HepG2 (cell line): ENCODE measurements at regions of chr22 and their contacts with region 1.

Region 1: DNA sequence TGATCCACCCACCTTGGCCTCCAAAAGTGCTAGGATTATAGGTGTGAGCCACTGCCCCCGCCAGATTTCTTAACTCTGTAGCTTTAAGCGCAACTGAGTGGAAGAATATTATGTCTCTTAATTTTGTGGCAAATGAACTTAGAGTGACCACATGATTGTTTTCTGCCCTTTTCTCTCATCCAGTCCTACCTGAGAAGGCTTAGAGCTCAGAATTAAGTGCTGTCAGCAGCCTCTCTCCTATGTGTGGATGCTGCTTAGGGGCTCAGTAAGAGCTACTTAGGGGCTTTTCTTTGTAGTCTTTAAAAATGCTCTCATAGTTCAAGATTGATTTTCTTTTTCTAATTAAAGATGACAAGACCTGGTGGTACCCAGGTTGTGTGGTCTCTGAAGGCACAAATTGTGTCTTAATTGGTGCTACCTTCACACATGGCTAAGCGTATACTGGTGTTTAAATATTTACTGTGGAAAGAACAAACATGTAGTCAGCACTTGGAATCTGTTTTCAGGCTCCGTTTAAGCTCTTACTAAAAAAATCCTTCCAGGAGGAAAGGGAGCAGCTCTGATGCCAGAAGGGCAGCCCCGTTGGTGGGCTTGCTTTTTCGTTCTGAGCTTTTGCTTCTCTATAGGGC is 59.3 kb downstream of the DEPDC5 start:
- DNase-seq: peak; percentile 22
- ATAC-seq: peak; percentile 26; the same call in 1 of the 3 replicates
- H3K4me3 ChIP-seq: no peak overlapping the region
- H3K27ac ChIP-seq: peak overlapping the region; percentile 36
- H3K4me1 ChIP-seq: peaks cover 40% of the 10 kb centered on the region
- H3K27me3 ChIP-seq: no peaks in the 10 kb centered on the region
- CTCF ChIP-seq: no peak
- EP300 ChIP-seq: peak in 1 of 2 experiments; percentile 23; a peak in 1 of 4 replicates
- POLR2A ChIP-seq: no peak
- RAD21 ChIP-seq: no peak

Region 2: DNA sequence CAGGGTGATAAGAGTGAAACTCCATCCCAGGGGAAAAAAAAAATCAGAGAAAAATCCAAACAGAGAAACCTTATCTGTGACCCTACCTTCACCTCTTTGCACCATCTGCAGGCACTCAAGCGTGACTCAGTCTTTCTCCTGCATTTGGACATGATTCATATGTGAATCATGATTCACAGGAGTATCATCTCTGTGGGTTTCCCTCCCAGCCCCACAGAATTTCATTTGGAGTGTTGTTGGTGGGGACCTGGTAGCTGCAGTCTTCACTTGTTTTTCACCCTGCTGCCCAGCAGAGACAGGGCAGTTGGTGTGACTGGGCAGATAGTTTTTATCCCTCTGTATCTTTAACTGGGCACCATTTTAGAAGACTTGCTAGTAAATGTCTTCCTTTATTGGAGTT is 16.4 kb after region 1 on chr22:
- CTCF ChIA-PET with region 1: no interaction called
- POLR2A ChIA-PET with region 1: interaction called, 10 read pairs
- in situ Hi-C with region 1: no loop called
- intact Hi-C with region 1: no loop called
- DNase-seq: peak; percentile 46
- ATAC-seq: no peak
- H3K4me3 ChIP-seq: no peak overlapping the region
- H3K27ac ChIP-seq: no peak overlapping the region
- H3K4me1 ChIP-seq: peaks cover 16% of the 10 kb centered on the region
- H3K27me3 ChIP-seq: no peaks in the 10 kb centered on the region
- CTCF ChIP-seq: no peak
- EP300 ChIP-seq: peak in 1 of 2 experiments; percentile 9; a peak in 1 of 4 replicates
- POLR2A ChIP-seq: no peak
- RAD21 ChIP-seq: no peak

Region 3: DNA sequence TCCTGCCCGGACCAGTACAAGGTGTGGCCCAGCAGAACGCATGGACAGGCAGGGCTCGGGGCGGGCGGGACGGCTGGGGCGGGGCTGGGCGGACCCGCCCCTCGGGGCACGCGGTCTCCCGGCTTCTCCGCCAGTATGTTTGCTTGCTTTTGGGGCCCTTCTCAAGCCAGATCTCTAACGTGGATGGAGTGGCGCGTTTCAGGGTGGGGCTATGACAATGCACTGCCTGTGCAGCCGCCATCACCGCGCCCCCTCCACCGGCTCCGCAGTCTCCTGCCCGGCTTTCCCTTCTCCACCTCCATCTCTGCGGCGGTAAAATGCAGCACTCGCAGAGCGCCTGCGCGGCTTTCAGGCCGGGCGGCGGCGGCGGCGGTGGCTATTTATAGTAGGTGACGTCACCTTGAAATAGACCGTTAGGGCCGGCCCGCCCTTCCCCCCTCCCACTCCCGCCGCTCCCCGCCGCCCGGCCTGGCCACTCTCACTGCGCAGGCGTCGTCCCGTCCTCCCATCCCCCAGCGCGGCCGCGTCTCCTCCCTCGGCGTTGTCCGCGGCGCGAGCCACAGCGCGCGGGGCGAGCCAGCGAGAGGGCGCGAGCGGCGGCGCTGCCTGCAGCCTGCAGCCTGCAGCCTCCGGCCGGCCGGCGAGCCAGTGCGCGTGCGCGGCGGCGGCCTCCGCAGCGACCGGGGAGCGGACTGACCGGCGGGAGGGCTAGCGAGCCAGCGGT is 131.0 kb after region 1 on chr22 and contains the start of gene YWHAH:
- CTCF ChIA-PET with region 1: no interaction called
- POLR2A ChIA-PET with region 1: interaction called, 10 read pairs
- in situ Hi-C with region 1: no loop called
- intact Hi-C with region 1: no loop called
- DNase-seq: peak; percentile 88
- ATAC-seq: peak; percentile 81
- H3K4me3 ChIP-seq: peak within 1 kb of the TSS; percentile 61 to 94 (median 94)
- H3K27ac ChIP-seq: peak within 1 kb of the TSS; percentile 86
- H3K4me1 ChIP-seq: peaks cover 44% of the 10 kb centered on the region
- H3K27me3 ChIP-seq: no peaks in the 10 kb centered on the region; a peak in 1 of 5 replicates
- CTCF ChIP-seq: no peak; the same call in 1 of the 2 replicates
- EP300 ChIP-seq: no peak
- POLR2A ChIP-seq: peak; percentile 69 to 84
- RAD21 ChIP-seq: no peak
- total RNA-seq, gene YWHAH: 92.7 and 112 TPM in 2 replicates